Heart left ventricle (tissue), 16 donors: ENCODE measurements at regions of chr5 and their contacts with region 1.

Region 1: GRCh38 chr5:73534011-73534644 is 31.3 kb downstream of the ANKRA2 start:
- DNase-seq: no peak
- ATAC-seq: no peak
- H3K4me3 ChIP-seq: no peak overlapping the region
- H3K27ac ChIP-seq: no peak overlapping the region
- H3K4me1 ChIP-seq: no peaks in the 10 kb centered on the region
- H3K27me3 ChIP-seq: peaks cover 0 to 15% (median 0%) of the 10 kb centered on the region in 9 donors
- CTCF ChIP-seq: no peak
- POLR2A ChIP-seq: no peak

Region 2: GRCh38 chr5:73081093-73081492 is 453.0 kb before region 1 on chr5:
- intact Hi-C with region 1: loop called in 5 of 10 experiments (anchors 5 to 10 kb)
- DNase-seq: no peak
- ATAC-seq: no peak
- H3K4me3 ChIP-seq: no peak overlapping the region
- H3K27ac ChIP-seq: no peak overlapping the region
- H3K4me1 ChIP-seq: no peaks in the 10 kb centered on the region
- H3K27me3 ChIP-seq: no peaks in the 10 kb centered on the region
- CTCF ChIP-seq: no peak
- POLR2A ChIP-seq: no peak

Region 3: DNA sequence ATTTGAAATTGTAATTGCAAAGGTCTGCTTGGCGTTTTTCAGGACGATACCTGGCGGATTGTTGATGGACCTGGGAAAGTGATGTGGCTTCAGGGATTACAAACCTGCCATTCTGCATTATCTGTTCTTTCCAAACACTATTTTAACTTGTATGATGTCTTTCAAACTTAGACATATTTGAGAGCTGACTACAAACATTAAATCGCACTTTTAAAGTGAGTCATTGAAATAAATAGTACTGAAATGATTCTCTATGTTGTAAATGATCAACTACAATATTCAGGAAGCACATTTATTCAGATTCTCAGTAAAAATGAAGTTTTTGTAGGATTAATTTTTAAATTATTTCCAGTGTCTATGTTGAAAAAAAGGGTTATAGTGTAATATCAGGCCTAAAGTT is 446.1 kb before region 1 on chr5:
- intact Hi-C with region 1: loop called in 5 of 10 experiments (anchors 5 to 10 kb)
- DNase-seq: no peak
- ATAC-seq: no peak
- H3K4me3 ChIP-seq: no peak overlapping the region
- H3K27ac ChIP-seq: no peak overlapping the region
- H3K4me1 ChIP-seq: no peaks in the 10 kb centered on the region
- H3K27me3 ChIP-seq: no peaks in the 10 kb centered on the region
- CTCF ChIP-seq: no peak
- POLR2A ChIP-seq: no peak

Region 4: GRCh38 chr5:73433982-73434342 is 100.2 kb before region 1 on chr5:
- intact Hi-C with region 1: no loop called
- DNase-seq: no peak
- ATAC-seq: no peak
- H3K4me3 ChIP-seq: no peak overlapping the region
- H3K27ac ChIP-seq: no peak overlapping the region
- H3K4me1 ChIP-seq: peaks cover 6 to 22% (median 12%) of the 10 kb centered on the region in 12 donors
- H3K27me3 ChIP-seq: peaks cover 53 to 100% (median 80%) of the 10 kb centered on the region in 9 donors
- CTCF ChIP-seq: no peak
- POLR2A ChIP-seq: no peak

Region 5: GRCh38 chr5:73917433-73917832 is 383.3 kb after region 1 on chr5:
- intact Hi-C with region 1: no loop called
- DNase-seq: peak in 3 of 5 donors; percentile 39 to 65 (median 48)
- ATAC-seq: peak in 3 of 4 donors; percentile 50 to 79 (median 71)
- H3K4me3 ChIP-seq: no peak overlapping the region
- H3K27ac ChIP-seq: no peak overlapping the region
- H3K4me1 ChIP-seq: peaks cover 0 to 21% (median 4%) of the 10 kb centered on the region in 12 donors
- H3K27me3 ChIP-seq: no peaks in the 10 kb centered on the region
- CTCF ChIP-seq: no peak
- POLR2A ChIP-seq: no peak